K562 (cell line): ENCODE measurements at regions of chrX and their contacts with region 1.

Region 1: DNA sequence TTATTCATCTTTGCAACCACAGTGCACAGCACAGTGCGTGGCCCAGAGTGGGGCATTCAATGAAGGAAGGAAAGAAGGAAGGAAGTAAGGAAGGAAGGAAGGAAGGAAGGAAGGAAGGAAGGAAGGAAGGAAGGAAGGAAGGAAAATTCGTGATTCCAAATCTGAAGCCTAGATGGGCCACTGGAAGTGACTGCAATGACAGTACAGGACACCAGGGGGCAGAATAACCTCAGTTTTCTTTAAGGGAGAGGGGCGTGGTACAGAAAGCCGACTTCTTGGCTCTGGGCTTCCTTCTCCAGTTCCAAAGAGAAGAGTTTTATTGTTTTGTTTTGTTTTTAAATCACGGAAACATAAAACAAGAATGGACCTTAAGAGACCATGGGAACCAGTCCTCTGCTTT is 47.8 kb downstream of the APLN start:
- DNase-seq: peak; percentile 65 to 75 (median 69)
- ATAC-seq: peak; percentile 62
- H3K4me3 ChIP-seq: no peak overlapping the region
- H3K27ac ChIP-seq: no peak overlapping the region
- H3K4me1 ChIP-seq: peaks cover 10 to 15% of the 10 kb centered on the region in 2 experiments; a peak in 4 of 5 replicates
- H3K27me3 ChIP-seq: no peaks in the 10 kb centered on the region
- CTCF ChIP-seq: peak; percentile 76 to 84 (median 77)
- EP300 ChIP-seq: no peak
- POLR2A ChIP-seq: no peak
- RAD21 ChIP-seq: peak; percentile 87 to 89

Region 2: DNA sequence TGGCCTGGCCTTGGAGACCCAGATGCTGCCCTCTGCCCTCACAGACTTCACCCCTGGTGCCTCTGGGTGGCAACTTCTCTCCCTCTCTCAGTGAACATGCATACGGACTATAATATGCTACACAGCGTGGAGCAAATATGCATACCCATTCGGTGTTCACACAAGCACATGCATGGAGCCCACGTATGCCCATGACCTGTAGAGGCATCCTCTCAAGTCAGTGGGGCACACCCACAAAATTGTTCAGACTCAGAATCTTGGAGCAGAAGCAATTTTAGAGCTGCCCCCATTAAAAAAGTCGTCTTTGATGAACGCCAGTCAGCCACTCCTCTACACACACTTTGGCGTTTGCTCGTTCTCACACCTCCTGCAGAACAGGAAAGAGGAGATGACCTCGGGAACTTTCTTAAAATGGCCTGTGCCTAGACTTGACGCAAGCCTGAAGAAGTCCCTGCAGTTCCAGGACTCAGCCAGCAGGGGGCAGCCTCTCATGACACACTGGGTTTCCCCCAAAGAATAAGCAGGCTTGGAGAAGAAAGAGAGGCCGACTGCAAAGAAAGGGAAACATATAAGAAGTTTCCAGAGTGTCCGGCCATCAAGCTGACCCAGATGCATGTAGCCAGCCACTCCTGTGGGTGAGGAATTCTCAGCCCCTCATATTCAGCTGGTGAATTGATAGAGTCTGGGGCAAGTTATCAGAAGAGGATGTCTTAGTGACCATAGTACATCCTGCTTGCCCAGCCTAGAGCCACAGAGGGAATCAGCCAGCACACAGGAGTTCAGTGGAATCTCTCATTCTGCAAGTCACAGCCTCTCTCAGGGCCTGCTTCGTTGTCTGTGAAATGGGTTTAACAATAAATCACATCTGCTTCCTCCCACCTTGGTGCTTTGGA is 30.5 kb after region 1 on chrX:
- CTCF ChIA-PET with region 1: interaction called, 7 read pairs
- POLR2A ChIA-PET with region 1: no interaction called
- in situ Hi-C with region 1: no loop called
- intact Hi-C with region 1: loop called (anchors 2 kb)
- DNase-seq: peak; percentile 60 to 81 (median 67)
- ATAC-seq: peak; percentile 80
- H3K4me3 ChIP-seq: no peak overlapping the region
- H3K27ac ChIP-seq: no peak overlapping the region
- H3K4me1 ChIP-seq: peaks cover 14 to 19% of the 10 kb centered on the region in 2 experiments
- H3K27me3 ChIP-seq: peaks cover 0 to 4% of the 10 kb centered on the region in 2 experiments; a peak in 2 of 5 replicates
- CTCF ChIP-seq: peak; percentile 77 to 91 (median 86)
- EP300 ChIP-seq: no peak
- POLR2A ChIP-seq: no peak
- RAD21 ChIP-seq: peak; percentile 45 to 74; a peak in 3 of 4 replicates

Region 3: DNA sequence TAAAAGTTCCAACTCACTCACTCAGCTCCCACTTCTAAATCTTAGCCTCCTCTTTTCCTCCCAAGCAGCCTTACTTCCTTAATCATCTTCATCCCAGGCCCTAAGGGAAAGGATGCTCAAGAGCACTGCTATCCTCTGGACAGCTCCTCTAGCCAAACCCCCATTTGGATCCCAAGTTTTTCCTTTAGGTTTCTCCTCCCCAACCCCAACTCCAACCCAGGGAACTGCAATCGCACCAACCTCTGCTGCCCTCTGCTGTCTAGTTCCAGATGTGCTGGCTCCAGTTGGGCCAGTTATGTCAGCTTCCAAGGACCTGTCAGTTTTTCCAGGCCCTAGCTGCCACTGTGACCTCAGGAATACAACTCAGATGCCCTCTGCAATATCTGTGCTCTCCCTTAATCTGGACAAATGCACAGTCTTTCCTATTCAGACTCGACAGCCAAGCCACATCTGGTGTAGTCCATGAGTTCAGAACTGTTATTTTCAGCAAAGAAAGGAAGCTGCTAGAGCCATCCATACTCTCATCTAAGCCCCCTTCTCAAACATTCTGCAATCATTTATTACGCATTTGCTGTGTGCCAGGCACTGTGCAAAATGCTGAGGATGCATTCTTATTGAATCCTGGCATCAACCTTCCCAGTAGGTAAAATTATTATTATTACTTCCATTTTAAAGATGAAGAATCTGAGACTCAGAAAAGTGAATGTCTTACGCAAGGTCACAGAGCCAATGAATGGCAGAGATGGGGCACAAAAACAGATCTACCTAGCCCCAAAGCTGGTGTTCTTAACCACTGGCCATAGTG is 119.6 kb after region 1 on chrX:
- CTCF ChIA-PET with region 1: interaction called, 31 read pairs
- POLR2A ChIA-PET with region 1: interaction called, 3 read pairs
- in situ Hi-C with region 1: loop called (anchors 5 kb)
- intact Hi-C with region 1: loop called (anchors 1 kb)
- DNase-seq: peak; percentile 38 to 61 (median 48)
- ATAC-seq: peak; percentile 91
- H3K4me3 ChIP-seq: no peak overlapping the region
- H3K27ac ChIP-seq: no peak overlapping the region
- H3K4me1 ChIP-seq: peaks cover 0 to 6% of the 10 kb centered on the region in 2 experiments; a peak in 2 of 5 replicates
- H3K27me3 ChIP-seq: peaks cover 0 to 4% of the 10 kb centered on the region in 2 experiments; a peak in 2 of 5 replicates
- CTCF ChIP-seq: peak; percentile 72 to 80 (median 74)
- EP300 ChIP-seq: no peak
- POLR2A ChIP-seq: no peak
- RAD21 ChIP-seq: peak; percentile 77 to 87

Region 4: DNA sequence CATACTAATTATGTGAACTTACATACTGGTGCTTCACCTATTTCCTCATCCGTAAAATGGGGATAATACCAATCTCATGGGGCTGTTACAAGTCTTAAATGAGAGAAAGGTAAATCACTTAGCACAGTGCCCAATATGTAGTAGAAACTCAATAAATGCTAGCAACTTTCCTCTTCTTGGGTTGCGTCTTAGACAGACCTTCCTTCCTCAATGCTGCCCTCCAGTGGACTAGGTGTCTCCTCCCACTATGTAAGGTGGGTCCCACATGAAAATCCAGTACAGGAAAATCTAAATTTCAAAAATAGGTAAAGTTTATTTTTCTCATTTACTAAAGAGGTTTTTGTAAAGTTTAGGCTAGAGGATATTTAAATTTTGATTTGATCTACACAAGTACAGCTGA is 216.2 kb after region 1 on chrX:
- CTCF ChIA-PET with region 1: interaction called, 4 read pairs
- POLR2A ChIA-PET with region 1: no interaction called
- in situ Hi-C with region 1: loop called (anchors 10 kb)
- intact Hi-C with region 1: loop called (anchors 5 kb)
- DNase-seq: peak; percentile 48 to 63 (median 50)
- ATAC-seq: peak; percentile 88
- H3K4me3 ChIP-seq: no peak overlapping the region
- H3K27ac ChIP-seq: no peak overlapping the region
- H3K4me1 ChIP-seq: 0 out of 5 replicates have a peak, but pooled peaks cover 0 to 2% of the 10 kb centered on the region in 2 experiments
- H3K27me3 ChIP-seq: no peaks in the 10 kb centered on the region
- CTCF ChIP-seq: peak; percentile 55 to 64 (median 58)
- EP300 ChIP-seq: no peak
- POLR2A ChIP-seq: no peak
- RAD21 ChIP-seq: peak; percentile 64

Region 5: DNA sequence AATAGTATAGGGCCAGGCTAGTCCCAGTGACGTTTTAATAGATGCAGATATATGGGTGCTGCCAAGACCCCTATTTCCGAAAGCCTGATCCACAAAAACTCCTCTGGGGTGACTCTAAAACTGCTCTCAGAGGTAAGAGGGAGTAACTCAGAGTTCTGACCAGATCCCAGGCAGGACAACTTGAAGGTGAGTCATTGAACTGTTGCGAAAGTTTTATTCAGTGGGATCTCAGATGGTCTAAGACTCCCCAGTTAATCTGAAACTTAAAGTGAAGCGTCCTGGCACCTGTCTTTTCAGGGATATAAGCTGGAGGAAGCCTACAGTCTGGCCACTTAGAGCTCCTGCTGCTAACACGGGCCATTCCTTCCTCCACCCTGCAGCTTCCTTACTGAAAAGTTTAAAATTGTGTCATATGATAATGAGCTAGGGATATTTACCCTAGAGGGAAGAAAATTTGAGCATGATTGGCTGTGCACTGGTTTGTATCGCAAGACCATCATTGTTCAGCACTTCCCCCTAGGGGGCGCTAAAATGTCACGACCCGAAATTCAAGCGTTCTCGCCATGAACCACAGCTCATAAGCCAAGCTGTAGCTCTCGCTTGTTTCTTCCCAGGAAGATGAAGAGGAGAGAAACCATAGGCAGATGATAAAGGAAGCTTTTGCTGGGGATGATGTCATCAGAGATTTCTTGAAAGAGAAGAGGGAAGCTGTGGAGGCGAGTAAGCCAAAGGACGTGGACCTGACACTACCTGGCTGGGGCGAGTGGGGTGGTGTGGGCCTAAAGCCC is 318.6 kb after region 1 on chrX:
- CTCF ChIA-PET with region 1: no interaction called
- POLR2A ChIA-PET with region 1: no interaction called
- in situ Hi-C with region 1: no loop called
- intact Hi-C with region 1: loop called (anchors 5 kb)
- DNase-seq: peak; percentile 36 to 75 (median 50)
- ATAC-seq: peak; percentile 90
- H3K4me3 ChIP-seq: no peak overlapping the region
- H3K27ac ChIP-seq: no peak overlapping the region
- H3K4me1 ChIP-seq: no peaks in the 10 kb centered on the region
- H3K27me3 ChIP-seq: no peaks in the 10 kb centered on the region
- CTCF ChIP-seq: peak; percentile 59 to 78 (median 70)
- EP300 ChIP-seq: no peak
- POLR2A ChIP-seq: 0 out of 2 replicates have a peak, but pooled peaks have one; percentile 19
- RAD21 ChIP-seq: peak; percentile 80

Region 6: GRCh38 chrX:130190801-130191200 is 583.9 kb after region 1 on chrX:
- CTCF ChIA-PET with region 1: no interaction called
- POLR2A ChIA-PET with region 1: no interaction called
- in situ Hi-C with region 1: no loop called
- intact Hi-C with region 1: loop called (anchors 5 kb)
- DNase-seq: no peak
- ATAC-seq: no peak
- H3K4me3 ChIP-seq: no peak overlapping the region
- H3K27ac ChIP-seq: no peak overlapping the region
- H3K4me1 ChIP-seq: peaks cover 0 to 8% of the 10 kb centered on the region in 2 experiments; a peak in 2 of 5 replicates
- H3K27me3 ChIP-seq: no peaks in the 10 kb centered on the region
- CTCF ChIP-seq: no peak
- EP300 ChIP-seq: no peak
- POLR2A ChIP-seq: no peak
- RAD21 ChIP-seq: no peak